ENCODE measurements at regions of chr6 and their contacts with region 1.

Region 1: GRCh38 chr6:39992861-39993622 is 58.8 kb upstream of the MOCS1 start:
- DNase-seq: peak in 2 of 4 experiments; percentile 24 to 77
- ATAC-seq: peak; percentile 87
- H3K4me3 ChIP-seq: no peak overlapping the region
- H3K27ac ChIP-seq: peak overlapping the region; percentile 69
- H3K4me1 ChIP-seq: peaks cover 0 to 24% of the 10 kb centered on the region in 2 experiments; a peak in 3 of 5 replicates
- H3K27me3 ChIP-seq: no peaks in the 10 kb centered on the region
- CTCF ChIP-seq: no peak
- EP300 ChIP-seq: peak; percentile 89
- POLR2A ChIP-seq: no peak
- RAD21 ChIP-seq: peak in 1 of 2 experiments; percentile 10; a peak in 1 of 4 replicates

Region 2: GRCh38 chr6:40164345-40164755 is 171.3 kb after region 1 on chr6:
- CTCF ChIA-PET with region 1: no interaction called
- POLR2A ChIA-PET with region 1: no interaction called
- in situ Hi-C with region 1: no loop called
- intact Hi-C with region 1: loop called (anchors 10 kb)
- DNase-seq: peak; percentile 91 to 95 (median 92)
- ATAC-seq: peak; percentile 99
- H3K4me3 ChIP-seq: peak overlapping the region; percentile 39
- H3K27ac ChIP-seq: peak overlapping the region; percentile 58
- H3K4me1 ChIP-seq: peaks cover 0 to 13% of the 10 kb centered on the region in 2 experiments; a peak in 4 of 5 replicates
- H3K27me3 ChIP-seq: no peaks in the 10 kb centered on the region
- CTCF ChIP-seq: peak in 1 of 3 experiments; percentile 13; a peak in 1 of 6 replicates
- EP300 ChIP-seq: no peak
- POLR2A ChIP-seq: peak; percentile 95
- RAD21 ChIP-seq: no peak